WTC11 (cell line): ENCODE measurements at regions of chr11 and their contacts with region 1.

Region 1: GRCh38 chr11:123054301-123055065 is 7.5 kb downstream of the HSPA8 start:
- DNase-seq: no peak
- ATAC-seq: peak; percentile 62
- H3K4me3 Mint-ChIP-seq: no peak overlapping the region
- H3K27ac Mint-ChIP-seq: peak overlapping the region; percentile 82
- H3K4me1 Mint-ChIP-seq: peaks cover 21% of the 10 kb centered on the region
- H3K27me3 Mint-ChIP-seq: no peaks in the 10 kb centered on the region
- CTCF ChIP-seq: peak; percentile 52; the same call in 1 of the 2 replicates

Region 2: GRCh38 chr11:122882857-122883645 is 171.4 kb before region 1 on chr11:
- CTCF ChIA-PET with region 1: interaction called, 16 read pairs
- POLR2A ChIA-PET with region 1: no interaction called
- DNase-seq: no peak
- ATAC-seq: peak; percentile 63
- H3K4me3 Mint-ChIP-seq: peak overlapping the region; percentile 82
- H3K27ac Mint-ChIP-seq: no peak overlapping the region
- H3K4me1 Mint-ChIP-seq: peaks cover 41% of the 10 kb centered on the region
- H3K27me3 Mint-ChIP-seq: peaks cover 17% of the 10 kb centered on the region
- CTCF ChIP-seq: no peak

Region 3: DNA sequence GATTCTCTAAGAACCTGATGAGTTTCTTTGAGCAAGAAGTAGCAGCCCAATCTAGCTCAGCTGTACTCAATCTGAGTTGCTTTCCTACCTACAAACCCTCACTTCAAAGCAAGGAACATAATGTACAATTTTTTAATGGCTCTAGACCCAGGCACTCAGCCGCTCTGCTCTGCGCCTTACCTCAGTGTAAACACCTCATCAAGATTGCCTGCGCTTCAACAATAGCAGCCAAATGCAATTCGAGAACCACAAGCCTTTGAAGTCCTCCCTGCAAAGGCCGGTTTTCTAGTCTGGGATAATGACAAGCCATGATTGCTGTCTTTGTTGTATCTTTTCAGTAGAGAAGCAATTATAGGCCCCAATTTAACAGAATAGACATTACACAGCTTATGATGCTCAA is 133.9 kb before region 1 on chr11:
- CTCF ChIA-PET with region 1: interaction called, 10 read pairs
- POLR2A ChIA-PET with region 1: no interaction called
- DNase-seq: no peak
- ATAC-seq: peak; percentile 69
- H3K4me3 Mint-ChIP-seq: no peak overlapping the region
- H3K27ac Mint-ChIP-seq: no peak overlapping the region
- H3K4me1 Mint-ChIP-seq: peaks cover 13% of the 10 kb centered on the region
- H3K27me3 Mint-ChIP-seq: no peaks in the 10 kb centered on the region
- CTCF ChIP-seq: no peak

Region 4: GRCh38 chr11:123039605-123040432 is 14.7 kb before region 1 on chr11:
- CTCF ChIA-PET with region 1: interaction called, 27 read pairs
- POLR2A ChIA-PET with region 1: interaction called, 5 read pairs
- DNase-seq: no peak
- ATAC-seq: no peak
- H3K4me3 Mint-ChIP-seq: no peak overlapping the region
- H3K27ac Mint-ChIP-seq: no peak overlapping the region
- H3K4me1 Mint-ChIP-seq: no peaks in the 10 kb centered on the region
- H3K27me3 Mint-ChIP-seq: no peaks in the 10 kb centered on the region
- CTCF ChIP-seq: no peak